K562 (cell line): ENCODE measurements at regions of chr20 and their contacts with region 1.

Region 1: GRCh38 chr20:44460795-44461141 is 14.9 kb upstream of the TTPAL start:
- DNase-seq: peak; percentile 28 to 50 (median 36)
- ATAC-seq: peak; percentile 69
- H3K4me3 ChIP-seq: no peak overlapping the region
- H3K27ac ChIP-seq: no peak overlapping the region
- H3K4me1 ChIP-seq: peaks cover 0 to 4% of the 10 kb centered on the region in 2 experiments; a peak in 2 of 5 replicates
- H3K27me3 ChIP-seq: peaks cover 7 to 23% of the 10 kb centered on the region in 2 experiments; a peak in 2 of 5 replicates
- CTCF ChIP-seq: peak; percentile 52 to 83 (median 55); a peak in 5 of 6 replicates
- EP300 ChIP-seq: no peak
- POLR2A ChIP-seq: no peak
- RAD21 ChIP-seq: peak; percentile 83 to 92

Region 2: GRCh38 chr20:44109951-44110361 is 350.8 kb before region 1 on chr20:
- CTCF ChIA-PET with region 1: no interaction called
- POLR2A ChIA-PET with region 1: no interaction called
- in situ Hi-C with region 1: no loop called
- intact Hi-C with region 1: loop called (anchors 10 kb)
- DNase-seq: peak; percentile 28 to 46 (median 38)
- ATAC-seq: peak; percentile 83
- H3K4me3 ChIP-seq: no peak overlapping the region
- H3K27ac ChIP-seq: no peak overlapping the region
- H3K4me1 ChIP-seq: no peaks in the 10 kb centered on the region; a peak in 1 of 5 replicates
- H3K27me3 ChIP-seq: peaks cover 10 to 28% of the 10 kb centered on the region in 2 experiments; a peak in 4 of 5 replicates
- CTCF ChIP-seq: peak; percentile 36 to 57 (median 45); a peak in 5 of 6 replicates
- EP300 ChIP-seq: no peak
- POLR2A ChIP-seq: no peak
- RAD21 ChIP-seq: no peak

Region 3: DNA sequence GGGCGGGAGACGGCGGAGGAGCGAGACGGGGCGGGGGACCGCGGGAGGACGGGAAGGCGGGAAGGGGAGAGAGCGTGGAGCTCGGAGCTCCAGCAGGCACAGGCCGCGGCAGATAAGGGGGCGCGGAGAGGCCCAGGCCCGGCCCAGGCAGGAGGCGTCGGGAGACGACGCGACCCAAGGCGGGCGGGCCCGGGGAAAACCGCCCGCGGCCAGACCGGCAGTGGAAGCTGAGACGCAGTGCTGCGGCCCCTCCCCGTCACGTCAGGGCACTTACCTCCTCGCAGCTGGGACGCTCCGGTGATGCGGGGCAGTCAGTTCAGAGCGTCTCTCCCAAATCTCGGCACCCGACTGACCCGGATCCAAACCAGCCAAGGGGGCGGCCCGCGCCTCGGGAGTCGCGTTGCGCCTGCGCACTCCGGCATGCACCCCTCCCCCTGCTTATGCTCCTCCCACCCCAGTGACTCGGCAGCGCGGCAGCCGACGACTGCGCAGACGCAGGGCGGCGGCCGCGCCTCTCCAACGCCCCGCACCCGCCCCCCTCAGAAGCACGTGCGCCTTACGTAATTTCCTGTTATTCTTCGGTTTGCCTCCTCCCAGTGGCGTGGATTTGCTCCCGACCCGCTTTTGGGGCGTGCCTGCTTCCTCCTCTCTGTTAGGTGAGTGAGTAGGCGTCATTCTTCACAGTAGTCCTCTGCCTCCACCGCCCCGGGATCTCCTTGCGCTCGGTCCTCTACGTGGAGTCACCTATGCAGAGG is 250.2 kb before region 1 on chr20 and contains the start of gene OSER1:
- CTCF ChIA-PET with region 1: interaction called, 3 read pairs
- POLR2A ChIA-PET with region 1: no interaction called
- in situ Hi-C with region 1: loop called (anchors 10 kb)
- intact Hi-C with region 1: loop called (anchors 2 kb)
- DNase-seq: peak; percentile 97 to 99 (median 99)
- ATAC-seq: peak; percentile 89
- H3K4me3 ChIP-seq: peak within 1 kb of the TSS; percentile 94
- H3K27ac ChIP-seq: peak within 1 kb of the TSS; percentile 92
- H3K4me1 ChIP-seq: peaks cover 17 to 24% of the 10 kb centered on the region in 2 experiments
- H3K27me3 ChIP-seq: no peaks in the 10 kb centered on the region
- CTCF ChIP-seq: no peak
- EP300 ChIP-seq: peak; percentile 60; the same call in 1 of the 2 replicates
- POLR2A ChIP-seq: peak; percentile 85
- RAD21 ChIP-seq: no peak
- polyA plus RNA-seq, gene OSER1: 54.8 to 57.3 TPM

Region 4: DNA sequence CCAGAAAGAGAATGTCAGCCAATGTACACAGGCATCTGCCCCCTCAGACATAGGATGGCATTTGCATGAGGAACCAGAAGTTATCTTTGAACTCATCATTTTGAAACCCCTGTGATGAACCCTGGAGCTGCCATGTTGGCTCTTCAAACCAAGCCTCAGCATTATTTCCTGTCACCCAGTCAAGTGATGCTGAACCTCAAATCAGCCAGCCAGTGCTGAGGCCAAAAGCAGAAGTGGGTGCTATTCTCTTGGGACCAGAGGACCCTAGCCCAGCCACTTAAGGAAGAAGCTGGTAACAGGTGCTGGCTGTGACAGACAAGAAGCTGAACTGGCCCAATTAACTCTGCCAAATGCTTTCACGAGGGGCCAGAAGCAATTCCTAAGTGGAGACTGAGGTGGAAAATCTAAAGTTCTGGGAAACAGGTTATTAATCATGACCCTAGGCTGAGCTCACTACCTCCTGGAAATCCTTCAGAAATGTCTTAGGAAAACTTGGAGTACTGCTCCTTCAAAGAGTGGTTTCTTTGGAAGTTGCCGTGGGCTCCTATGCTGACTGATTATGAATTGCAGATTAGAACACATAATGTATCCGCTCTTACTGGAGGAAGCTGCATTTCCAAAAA is 125.6 kb after region 1 on chr20:
- CTCF ChIA-PET with region 1: no interaction called
- POLR2A ChIA-PET with region 1: no interaction called
- in situ Hi-C with region 1: no loop called
- intact Hi-C with region 1: no loop called
- DNase-seq: no peak
- ATAC-seq: no peak
- H3K4me3 ChIP-seq: no peak overlapping the region
- H3K27ac ChIP-seq: no peak overlapping the region
- H3K4me1 ChIP-seq: peaks cover 5 to 9% of the 10 kb centered on the region in 2 experiments
- H3K27me3 ChIP-seq: peaks cover 0 to 11% of the 10 kb centered on the region in 2 experiments; a peak in 2 of 5 replicates
- CTCF ChIP-seq: no peak
- EP300 ChIP-seq: no peak
- POLR2A ChIP-seq: no peak
- RAD21 ChIP-seq: no peak

Region 5: DNA sequence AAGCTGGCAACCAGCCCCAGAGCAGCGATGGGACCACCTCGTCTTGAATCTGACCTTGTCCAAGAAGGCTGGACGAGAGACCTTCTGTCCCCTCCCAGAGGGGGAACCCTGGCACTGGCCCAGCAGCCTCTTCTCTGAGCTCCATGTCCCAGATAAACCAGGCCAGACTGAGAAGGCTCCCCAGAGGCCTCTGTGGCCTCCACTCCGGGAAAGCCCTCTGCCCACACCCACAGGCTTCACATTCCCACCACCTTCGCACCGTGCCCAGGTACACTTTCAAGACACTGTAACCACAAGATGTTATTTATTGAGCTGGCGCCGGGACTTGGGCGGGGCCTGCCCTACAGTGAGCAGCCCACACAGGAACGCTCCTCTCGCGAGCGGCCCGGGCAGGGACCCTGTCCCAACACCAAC is 157.6 kb after region 1 on chr20:
- CTCF ChIA-PET with region 1: no interaction called
- POLR2A ChIA-PET with region 1: no interaction called
- in situ Hi-C with region 1: no loop called
- intact Hi-C with region 1: no loop called
- DNase-seq: no peak
- ATAC-seq: no peak
- H3K4me3 ChIP-seq: no peak overlapping the region
- H3K27ac ChIP-seq: no peak overlapping the region
- H3K4me1 ChIP-seq: peaks cover 10 to 18% of the 10 kb centered on the region in 2 experiments; a peak in 4 of 5 replicates
- H3K27me3 ChIP-seq: no peaks in the 10 kb centered on the region
- CTCF ChIP-seq: no peak
- EP300 ChIP-seq: no peak
- POLR2A ChIP-seq: no peak
- RAD21 ChIP-seq: no peak